Panc1 (cell line): ENCODE measurements at regions of chr19 and their contacts with region 1.

Region 1: GRCh38 chr19:13833330-13834243 is 38.3 kb downstream of the ZSWIM4 start:
- DNase-seq: no peak
- ATAC-seq: peak; percentile 76
- H3K4me3 ChIP-seq: peak overlapping the region in 1 of 2 experiments; percentile 29; a peak in 2 of 4 replicates
- H3K27ac ChIP-seq: peak overlapping the region; percentile 84
- H3K4me1 ChIP-seq: peaks cover 39% of the 10 kb centered on the region
- H3K27me3 ChIP-seq: no peaks in the 10 kb centered on the region
- CTCF ChIP-seq: peak; percentile 78

Region 2: DNA sequence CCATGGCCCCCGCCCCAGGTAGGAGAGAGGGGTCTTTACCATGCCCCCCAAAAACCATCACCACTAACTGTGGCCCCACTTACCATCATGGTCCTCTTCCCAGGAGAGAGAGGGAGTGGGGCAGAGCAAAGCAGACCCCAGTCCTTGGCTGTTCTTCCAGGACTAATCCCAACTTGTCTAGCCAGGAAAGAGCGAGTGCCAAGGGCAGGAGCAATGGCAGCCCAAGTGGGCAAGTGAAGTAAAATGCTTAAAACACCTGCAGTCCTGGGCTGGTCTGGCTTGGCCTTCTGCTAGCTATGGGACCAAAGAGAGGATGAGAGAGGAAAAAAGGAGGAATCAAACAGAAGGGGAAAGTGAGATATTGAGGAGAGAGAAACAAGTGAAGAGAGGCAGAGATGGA is 20.4 kb before region 1 on chr19:
- CTCF ChIA-PET with region 1: no interaction called
- POLR2A ChIA-PET with region 1: no interaction called
- in situ Hi-C with region 1: no loop called
- intact Hi-C with region 1: no loop called
- DNase-seq: no peak
- ATAC-seq: no peak
- H3K4me3 ChIP-seq: no peak overlapping the region
- H3K27ac ChIP-seq: no peak overlapping the region
- H3K4me1 ChIP-seq: no peaks in the 10 kb centered on the region
- H3K27me3 ChIP-seq: no peaks in the 10 kb centered on the region
- CTCF ChIP-seq: no peak

Region 3: DNA sequence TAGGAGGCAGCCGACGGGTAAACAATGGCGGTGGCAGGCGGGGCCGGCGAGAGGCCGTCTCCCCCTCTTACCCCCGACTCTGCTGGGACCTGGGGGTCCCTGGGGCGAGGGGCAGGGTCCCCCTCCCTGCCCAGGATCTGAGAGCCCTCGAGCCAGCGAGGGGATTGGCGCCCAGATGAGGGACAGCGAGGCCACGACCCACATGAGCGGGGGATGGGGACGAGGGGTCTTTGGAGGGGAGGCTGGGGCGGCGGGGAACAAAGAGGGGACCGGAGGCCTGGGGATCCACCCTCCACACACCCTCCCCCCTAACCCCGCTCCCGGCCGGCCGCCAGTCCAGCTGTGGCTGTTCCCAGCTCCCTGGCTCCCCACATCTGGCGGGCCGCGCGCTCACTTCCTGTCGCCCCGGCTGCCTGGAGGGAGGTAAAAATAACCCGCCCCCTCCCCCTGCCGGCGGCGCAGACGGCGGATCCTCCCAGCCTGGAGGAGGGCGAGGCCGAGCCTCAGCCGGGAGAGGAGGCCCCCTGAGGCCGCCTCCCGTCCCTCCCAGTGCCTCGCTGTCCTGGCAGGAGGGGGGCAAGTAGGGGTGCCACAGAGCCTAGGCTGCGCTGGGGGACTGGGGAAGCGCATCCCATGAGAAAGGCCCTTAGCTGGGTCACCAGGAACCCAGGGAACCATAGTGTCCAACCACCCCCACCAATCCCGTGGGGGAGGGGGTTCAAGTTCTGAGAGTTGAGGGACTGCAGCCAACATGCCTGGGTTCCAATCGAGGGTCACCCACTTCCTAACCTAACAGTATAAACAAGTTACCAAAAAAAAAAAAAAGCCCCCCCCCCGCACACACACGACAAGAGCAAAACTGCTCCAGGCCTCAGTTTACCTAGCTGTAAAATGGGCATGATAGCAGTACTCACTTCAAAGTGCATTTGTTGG is 14.1 kb after region 1 on chr19:
- CTCF ChIA-PET with region 1: interaction called, 3 read pairs
- POLR2A ChIA-PET with region 1: interaction called, 26 read pairs
- in situ Hi-C with region 1: no loop called
- intact Hi-C with region 1: no loop called
- DNase-seq: no peak
- ATAC-seq: peak; percentile 46
- H3K4me3 ChIP-seq: peak overlapping the region; percentile 31 to 45
- H3K27ac ChIP-seq: peak overlapping the region; percentile 98
- H3K4me1 ChIP-seq: peaks cover 74% of the 10 kb centered on the region
- H3K27me3 ChIP-seq: no peaks in the 10 kb centered on the region
- CTCF ChIP-seq: no peak

Region 4: DNA sequence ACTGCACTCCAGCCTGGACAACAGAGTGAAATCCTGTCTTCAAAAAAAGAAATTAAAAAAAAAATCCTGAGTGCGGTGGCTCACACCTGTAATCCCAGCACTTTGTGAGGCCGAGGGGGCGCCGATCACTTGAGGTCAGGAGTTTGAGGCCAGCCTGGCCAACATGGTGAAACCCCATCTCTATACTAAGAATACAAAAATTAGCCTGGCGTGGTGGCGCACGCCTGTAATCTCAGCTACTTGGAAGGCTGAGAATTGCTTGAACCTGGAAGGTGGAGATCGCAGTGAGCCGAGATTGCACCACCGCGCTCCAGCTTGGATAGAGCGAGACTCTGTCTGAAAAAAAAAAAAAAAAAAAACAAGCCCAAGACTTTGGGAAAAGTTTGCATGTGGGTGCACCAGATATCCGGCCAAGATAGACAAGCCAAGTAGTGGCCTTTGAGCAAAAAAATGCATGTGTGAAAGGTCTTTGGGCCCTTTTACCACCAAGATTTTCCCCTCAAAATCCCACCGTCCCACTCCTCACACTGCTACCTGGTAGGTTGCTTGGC is 678.9 kb after region 1 on chr19:
- CTCF ChIA-PET with region 1: no interaction called
- POLR2A ChIA-PET with region 1: interaction called, 12 read pairs
- in situ Hi-C with region 1: no loop called
- intact Hi-C with region 1: no loop called
- DNase-seq: no peak
- ATAC-seq: no peak
- H3K4me3 ChIP-seq: no peak overlapping the region
- H3K27ac ChIP-seq: no peak overlapping the region
- H3K4me1 ChIP-seq: peaks cover 30% of the 10 kb centered on the region
- H3K27me3 ChIP-seq: no peaks in the 10 kb centered on the region
- CTCF ChIP-seq: no peak